Activated CD4-positive, alpha-beta memory T cell treated with anti-CD3 and anti-CD28 coated beads for 36 hours (primary cell): ENCODE measurements at regions of chr3 and their contacts with region 1.

Region 1: DNA sequence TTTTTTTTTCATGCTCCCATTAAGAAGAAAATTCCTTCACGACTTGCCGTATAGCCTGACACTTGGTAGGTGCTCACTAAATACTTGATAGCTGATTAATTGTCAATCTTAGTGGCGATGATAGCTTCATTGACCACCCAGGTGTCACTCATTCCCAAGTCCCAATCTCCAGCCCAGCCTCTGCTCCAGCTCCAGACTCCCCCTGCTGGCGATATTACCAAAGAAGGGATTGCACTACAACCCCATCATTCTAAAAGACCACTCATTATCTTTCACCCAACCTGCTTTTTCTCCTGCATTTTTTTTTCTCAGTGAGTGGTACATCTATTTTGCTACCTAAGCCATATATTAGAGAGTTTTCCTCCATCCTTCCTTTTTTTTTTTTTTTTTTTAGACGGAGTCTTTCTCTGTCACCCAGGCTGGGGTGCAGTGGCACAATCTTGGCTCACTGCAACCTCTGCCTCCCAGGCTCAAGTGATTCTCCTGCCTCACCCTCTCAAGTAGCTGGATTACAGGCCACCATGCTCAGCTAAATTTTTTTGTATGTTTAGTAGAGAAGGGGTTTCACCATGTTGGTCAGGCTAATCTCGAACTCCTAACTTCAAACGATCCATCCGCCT is 19.5 kb upstream of the COMMD2 start:
- DNase-seq: peak; percentile 45
- H3K4me3 Mint-ChIP-seq: no peak overlapping the region
- H3K27ac Mint-ChIP-seq: no peak overlapping the region
- H3K4me1 Mint-ChIP-seq: no peaks in the 10 kb centered on the region
- H3K27me3 Mint-ChIP-seq: peaks cover 14% of the 10 kb centered on the region

Region 2: DNA sequence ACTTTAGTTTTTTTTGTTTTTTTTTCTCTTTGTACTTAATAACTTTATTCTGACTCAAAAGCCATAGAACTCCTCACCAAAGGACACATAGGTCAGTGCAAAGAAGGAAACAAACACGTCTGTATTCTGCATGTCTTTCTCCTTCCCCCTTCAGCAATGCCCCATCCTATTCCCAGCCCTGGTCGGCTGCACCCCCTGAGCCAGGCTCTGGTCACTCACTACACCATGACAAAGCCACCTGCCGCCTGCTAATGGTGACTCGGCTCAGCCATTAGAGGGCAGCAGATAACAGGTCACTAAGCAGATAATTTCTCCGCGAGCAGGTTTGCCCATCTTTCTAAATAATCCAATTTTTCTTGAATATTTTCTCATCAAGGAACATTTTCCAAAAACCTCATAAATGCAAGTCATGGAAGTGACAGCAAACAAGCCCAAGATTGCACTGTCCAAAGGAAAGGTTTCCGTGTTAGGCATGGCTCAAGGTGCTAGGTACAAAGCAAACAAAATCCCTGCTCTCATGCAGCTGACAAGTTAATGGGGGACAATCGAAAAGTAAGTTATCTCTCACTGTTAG is 259.5 kb before region 1 on chr3:
- CTCF ChIA-PET with region 1: interaction called, 31 read pairs
- POLR2A ChIA-PET with region 1: no interaction called
- intact Hi-C with region 1: loop called (anchors 1 kb)
- DNase-seq: peak; percentile 51
- H3K4me3 Mint-ChIP-seq: no peak overlapping the region
- H3K27ac Mint-ChIP-seq: no peak overlapping the region
- H3K4me1 Mint-ChIP-seq: peaks cover 10% of the 10 kb centered on the region
- H3K27me3 Mint-ChIP-seq: peaks cover 15% of the 10 kb centered on the region

Region 3: DNA sequence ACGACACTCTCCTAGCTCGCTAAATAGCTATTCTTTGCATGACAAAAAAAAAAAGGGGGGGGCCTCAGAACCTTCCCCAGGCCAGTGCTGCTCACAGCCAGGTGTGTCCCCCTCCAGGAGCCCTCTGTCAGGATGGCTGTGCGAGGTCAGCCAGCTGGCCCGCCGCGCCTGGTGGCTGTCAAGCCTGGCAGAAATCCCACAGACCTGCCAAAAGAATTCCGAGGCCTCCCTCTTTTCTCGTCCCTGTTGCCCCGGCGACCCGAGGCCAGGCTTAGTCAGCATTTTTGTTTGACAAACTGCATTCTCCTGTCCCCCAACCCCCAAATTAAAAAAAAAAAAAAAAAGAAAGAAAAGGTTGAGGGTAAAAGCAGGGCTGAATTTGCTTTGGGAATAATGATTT is 235.3 kb before region 1 on chr3:
- CTCF ChIA-PET with region 1: interaction called, 13 read pairs
- POLR2A ChIA-PET with region 1: no interaction called
- intact Hi-C with region 1: loop called (anchors 5 kb)
- DNase-seq: no peak
- H3K4me3 Mint-ChIP-seq: no peak overlapping the region
- H3K27ac Mint-ChIP-seq: no peak overlapping the region
- H3K4me1 Mint-ChIP-seq: no peaks in the 10 kb centered on the region
- H3K27me3 Mint-ChIP-seq: no peaks in the 10 kb centered on the region

Region 4: DNA sequence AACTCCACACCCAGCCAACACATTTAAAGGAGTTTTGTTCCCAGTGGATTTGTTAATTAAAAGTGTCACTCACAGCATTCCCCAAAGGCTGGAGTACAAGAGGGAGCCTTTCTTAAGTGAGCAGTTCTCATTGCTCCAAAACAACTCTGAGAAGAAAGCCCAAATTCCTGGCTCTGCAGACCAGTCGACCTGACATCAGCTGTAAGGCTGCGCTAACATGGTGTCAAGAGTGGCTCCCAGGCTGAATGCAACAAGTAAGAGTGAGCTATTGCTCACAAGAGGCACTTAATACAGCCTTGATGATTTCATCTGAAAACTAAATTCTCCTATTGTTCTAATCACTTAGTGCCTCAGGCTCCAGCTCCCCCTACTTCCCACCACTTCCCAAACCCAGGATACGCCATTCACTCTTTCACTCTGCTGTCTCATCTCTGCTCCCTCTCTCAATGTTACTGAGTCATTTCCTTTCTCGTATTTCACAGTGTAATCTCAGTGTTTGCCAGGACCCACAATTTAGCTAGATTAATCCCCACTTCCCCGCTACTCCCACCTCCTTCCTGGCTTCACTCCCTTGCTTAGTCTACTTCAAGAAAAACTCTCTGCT is 195.7 kb before region 1 on chr3:
- CTCF ChIA-PET with region 1: interaction called, 100 read pairs
- POLR2A ChIA-PET with region 1: no interaction called
- intact Hi-C with region 1: no loop called
- DNase-seq: peak; percentile 43
- H3K4me3 Mint-ChIP-seq: no peak overlapping the region
- H3K27ac Mint-ChIP-seq: no peak overlapping the region
- H3K4me1 Mint-ChIP-seq: peaks cover 38% of the 10 kb centered on the region
- H3K27me3 Mint-ChIP-seq: peaks cover 11% of the 10 kb centered on the region